ENCODE measurements at regions of chr10 and their contacts with region 1.

Region 1: DNA sequence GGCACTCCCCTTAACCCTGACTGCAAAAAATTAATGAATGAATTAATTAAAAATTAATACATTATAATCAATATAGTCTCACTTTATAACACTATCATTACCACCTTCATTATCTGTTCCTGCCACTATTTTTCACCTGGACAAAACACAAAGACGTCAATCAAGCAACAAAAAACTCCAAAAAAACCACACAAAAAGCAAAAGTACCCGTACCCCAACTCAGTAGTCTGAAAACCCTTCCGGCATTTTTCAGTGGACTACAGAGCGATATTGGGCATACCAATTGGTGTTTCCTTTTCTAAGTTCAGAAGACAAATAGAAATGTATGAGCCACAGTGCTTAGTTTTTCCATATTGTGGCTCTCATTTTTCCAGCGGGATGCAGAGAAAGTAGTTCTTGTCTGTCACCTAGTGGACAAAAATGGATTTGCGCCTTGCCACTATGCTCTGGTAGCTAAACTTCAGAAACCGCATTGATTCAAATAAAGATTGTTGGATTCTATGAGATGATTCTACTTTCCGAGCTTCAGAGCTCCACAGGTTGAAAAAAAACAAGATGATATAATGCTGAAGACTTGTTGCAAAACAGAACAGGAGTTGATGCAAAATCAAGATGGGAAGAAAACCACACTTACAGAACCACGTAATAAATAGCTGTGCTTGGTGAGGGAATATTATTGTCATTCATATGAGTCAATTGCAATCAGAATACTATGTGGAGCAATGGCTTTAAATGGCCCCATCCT is 50.6 kb upstream of the ITGB1 start:
- DNase-seq: peak in 2 of 5 donors; percentile 63 to 64
- ATAC-seq: peak in 3 of 4 donors; percentile 37 to 41 (median 38)
- H3K4me3 ChIP-seq: no peak overlapping the region
- H3K27ac ChIP-seq: peak overlapping the region in 2 of 12 donors; percentile 30 to 53
- H3K4me1 ChIP-seq: peaks cover 0 to 54% (median 10%) of the 10 kb centered on the region in 12 donors
- H3K27me3 ChIP-seq: no peaks in the 10 kb centered on the region
- CTCF ChIP-seq: peak; percentile 96 to 100 (median 99)
- POLR2A ChIP-seq: no peak

Region 2: GRCh38 chr10:32795598-32796183 is 213.0 kb before region 1 on chr10:
- intact Hi-C with region 1: loop called (anchors 1 to 2 kb)
- DNase-seq: no peak
- ATAC-seq: no peak
- H3K4me3 ChIP-seq: no peak overlapping the region
- H3K27ac ChIP-seq: no peak overlapping the region
- H3K4me1 ChIP-seq: no peaks in the 10 kb centered on the region
- H3K27me3 ChIP-seq: no peaks in the 10 kb centered on the region
- CTCF ChIP-seq: peak; percentile 55 to 89 (median 73)
- POLR2A ChIP-seq: no peak

Region 3: GRCh38 chr10:32929632-32930031 is 79.0 kb before region 1 on chr10:
- intact Hi-C with region 1: loop called in 2 of 10 experiments (anchors 10 kb)
- DNase-seq: no peak
- ATAC-seq: peak in 1 of 4 donors; percentile 37
- H3K4me3 ChIP-seq: peak overlapping the region in 4 of 12 donors; percentile 7 to 25 (median 16)
- H3K27ac ChIP-seq: peak overlapping the region in 3 of 12 donors; percentile 2 to 19 (median 7)
- H3K4me1 ChIP-seq: peaks cover 0 to 31% (median 9%) of the 10 kb centered on the region in 12 donors
- H3K27me3 ChIP-seq: no peaks in the 10 kb centered on the region
- CTCF ChIP-seq: no peak
- POLR2A ChIP-seq: no peak

Region 4: GRCh38 chr10:32958085-32959005 is 50.3 kb before region 1 on chr10 and contains the start of gene ITGB1:
- intact Hi-C with region 1: loop called (anchors 1 to 10 kb)
- DNase-seq: peak; percentile 98 to 99 (median 99)
- ATAC-seq: peak; percentile 95 to 97 (median 96)
- H3K4me3 ChIP-seq: peak within 1 kb of the TSS; percentile 71 to 100 (median 93)
- H3K27ac ChIP-seq: peak within 1 kb of the TSS; percentile 94 to 100 (median 99)
- H3K4me1 ChIP-seq: peaks cover 5 to 83% (median 65%) of the 10 kb centered on the region in 12 donors
- H3K27me3 ChIP-seq: no peaks in the 10 kb centered on the region
- CTCF ChIP-seq: no peak
- POLR2A ChIP-seq: peak; percentile 70 to 94
- total RNA-seq, gene ITGB1: 542 to 1,594 (median 701) TPM

Region 5: GRCh38 chr10:33115738-33116719 is 107.4 kb after region 1 on chr10:
- intact Hi-C with region 1: loop called in 3 of 10 experiments (anchors 10 kb)
- DNase-seq: peak in 2 of 5 donors; percentile 29 to 44
- ATAC-seq: peak in 3 of 4 donors; percentile 41 to 67 (median 57)
- H3K4me3 ChIP-seq: no peak overlapping the region
- H3K27ac ChIP-seq: peak overlapping the region in 3 of 12 donors; percentile 20 to 73 (median 54)
- H3K4me1 ChIP-seq: peaks cover 0 to 67% (median 12%) of the 10 kb centered on the region in 12 donors
- H3K27me3 ChIP-seq: no peaks in the 10 kb centered on the region
- CTCF ChIP-seq: peak; percentile 39 to 71 (median 56)
- POLR2A ChIP-seq: no peak

Region 6: DNA sequence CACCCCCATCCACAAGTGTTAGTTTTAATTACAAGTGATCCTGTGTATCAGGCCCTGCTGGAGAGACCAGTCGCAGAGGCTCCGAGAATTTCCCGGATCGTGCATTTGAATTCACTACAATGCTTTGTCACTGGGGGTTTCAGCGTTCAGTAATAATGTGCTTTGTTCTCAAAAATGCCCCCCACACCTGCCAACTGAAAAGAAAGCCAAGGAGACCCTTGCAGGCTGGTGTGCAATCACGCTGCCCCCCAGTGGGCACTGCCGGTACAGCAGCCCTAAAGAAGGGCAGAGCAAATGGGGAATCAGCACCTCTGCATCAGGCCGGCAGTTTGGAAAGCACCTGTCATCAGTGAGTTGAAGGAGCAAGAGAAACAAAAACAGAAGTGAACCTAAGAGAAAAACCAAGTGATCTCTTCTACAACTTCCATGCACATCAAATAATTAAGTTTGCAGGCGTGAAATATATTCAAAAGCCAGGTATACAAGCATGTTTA is 1628.8 kb after region 1 on chr10:
- intact Hi-C with region 1: loop called in 1 of 10 experiments (anchors 5 kb)
- DNase-seq: peak; percentile 28 to 75 (median 64)
- ATAC-seq: peak; percentile 25 to 72 (median 58)
- H3K4me3 ChIP-seq: no peak overlapping the region
- H3K27ac ChIP-seq: no peak overlapping the region
- H3K4me1 ChIP-seq: peaks cover 0 to 25% (median 17%) of the 10 kb centered on the region in 12 donors
- H3K27me3 ChIP-seq: no peaks in the 10 kb centered on the region
- CTCF ChIP-seq: peak; percentile 91 to 97 (median 94)
- POLR2A ChIP-seq: no peak